Calu3 (cell line): ENCODE measurements at regions of chr16 and their contacts with region 1.

Region 1: DNA sequence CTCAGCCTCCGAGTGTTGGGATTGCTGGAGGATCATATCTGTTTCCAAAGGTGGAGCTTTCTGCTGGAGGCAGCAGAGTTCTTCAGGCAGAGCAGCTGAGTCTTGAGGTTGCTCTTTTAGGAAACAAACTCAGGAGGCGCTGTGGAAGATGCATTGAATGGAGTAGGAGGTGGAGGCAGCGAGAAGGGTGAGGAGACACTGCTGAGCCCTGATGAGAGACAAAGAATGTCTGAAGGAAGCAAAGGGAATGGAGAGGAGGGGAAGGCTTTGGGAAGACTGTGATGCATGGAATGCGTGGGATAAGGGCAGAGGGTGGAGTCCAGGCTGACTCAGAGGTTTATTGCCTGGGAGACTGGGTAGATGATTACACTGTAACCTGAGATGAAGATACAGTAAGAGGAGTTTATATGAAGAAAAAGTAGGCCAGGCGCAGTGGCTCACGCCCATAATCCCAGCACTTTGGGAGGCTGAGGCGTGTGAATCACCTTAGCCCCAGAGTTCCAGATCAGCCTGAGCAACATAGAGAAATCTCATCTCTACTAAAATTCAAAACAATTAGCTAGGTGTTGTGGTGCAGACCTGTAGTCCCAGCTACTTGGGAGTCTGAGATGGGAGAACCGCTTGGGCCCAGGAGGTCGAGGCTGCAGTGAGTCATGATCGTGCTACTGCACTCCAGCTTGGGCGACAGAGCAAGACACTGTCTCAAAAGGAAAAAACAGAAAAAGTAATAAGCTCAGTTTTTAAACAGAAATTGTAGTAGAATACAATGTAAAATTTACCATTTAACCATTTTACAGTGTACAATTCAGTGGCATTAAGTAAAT is 17.8 kb upstream of the TMEM219 start:
- DNase-seq: peak; percentile 82
- H3K4me3 Mint-ChIP-seq: peak overlapping the region; percentile 38
- H3K27ac Mint-ChIP-seq: peak overlapping the region; percentile 69
- H3K4me1 Mint-ChIP-seq: peaks cover 30% of the 10 kb centered on the region
- H3K27me3 Mint-ChIP-seq: no peaks in the 10 kb centered on the region
- CTCF ChIP-seq: peak; percentile 33

Region 2: GRCh38 chr16:29915590-29916247 is 28.3 kb before region 1 on chr16:
- CTCF ChIA-PET with region 1: interaction called, 10 read pairs
- intact Hi-C with region 1: no loop called
- DNase-seq: no peak
- H3K4me3 Mint-ChIP-seq: peak overlapping the region; percentile 12
- H3K27ac Mint-ChIP-seq: peak overlapping the region; percentile 42
- H3K4me1 Mint-ChIP-seq: peaks cover 42% of the 10 kb centered on the region
- H3K27me3 Mint-ChIP-seq: no peaks in the 10 kb centered on the region
- CTCF ChIP-seq: no peak

Region 3: DNA sequence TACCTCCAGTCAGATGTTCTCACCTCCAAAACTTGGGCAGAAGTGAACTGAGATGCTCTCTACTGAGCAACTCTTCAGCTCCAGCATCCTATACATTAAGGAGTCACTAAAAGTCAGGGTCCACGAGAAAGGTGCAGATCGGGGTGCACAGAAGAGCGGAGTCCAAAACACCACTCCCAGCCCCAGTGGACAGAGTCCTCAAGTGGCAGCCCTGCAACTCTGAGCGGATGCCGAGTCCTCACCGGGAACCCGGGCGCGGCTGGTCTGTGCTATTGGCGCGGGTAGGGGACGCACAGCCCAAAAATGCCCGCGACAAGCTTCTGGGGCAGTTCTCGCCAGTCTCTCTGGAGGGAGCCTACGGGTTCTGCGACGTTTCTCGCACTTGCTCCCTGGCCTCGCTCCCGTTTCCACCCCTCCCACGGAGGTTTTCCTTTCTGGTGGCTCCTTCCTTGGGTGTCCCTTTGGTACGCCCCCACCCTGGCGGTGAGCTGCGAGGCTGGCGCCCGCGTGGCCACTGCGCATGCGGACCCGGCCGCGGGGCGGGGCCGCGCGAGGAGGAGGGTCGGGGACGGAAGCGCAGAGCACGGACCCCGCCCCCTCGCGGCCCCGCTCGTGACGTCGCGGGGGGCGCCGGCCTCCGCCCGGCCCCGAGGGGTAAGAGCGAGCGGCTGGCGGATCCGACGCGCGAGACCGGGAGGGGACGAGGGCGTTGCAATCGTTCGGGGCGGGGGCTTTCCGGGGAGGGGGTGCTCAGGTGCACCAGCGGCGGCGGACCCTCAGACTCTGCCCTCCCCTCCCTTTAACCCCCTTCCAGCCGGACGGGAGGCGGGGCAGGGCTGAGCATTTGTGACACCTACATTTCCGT is 17.7 kb after region 1 on chr16 and contains the start of gene TMEM219:
- CTCF ChIA-PET with region 1: interaction called, 19 read pairs
- intact Hi-C with region 1: no loop called
- DNase-seq: peak; percentile 98
- H3K4me3 Mint-ChIP-seq: peak within 1 kb of the TSS; percentile 82
- H3K27ac Mint-ChIP-seq: peak within 1 kb of the TSS; percentile 92
- H3K4me1 Mint-ChIP-seq: peaks cover 11% of the 10 kb centered on the region
- H3K27me3 Mint-ChIP-seq: no peaks in the 10 kb centered on the region
- CTCF ChIP-seq: peak; percentile 72
- total RNA-seq, gene TMEM219: 91.1 and 92.1 TPM in 2 replicates